ENCODE measurements at regions of chr15 and their contacts with region 1.

Region 1: DNA sequence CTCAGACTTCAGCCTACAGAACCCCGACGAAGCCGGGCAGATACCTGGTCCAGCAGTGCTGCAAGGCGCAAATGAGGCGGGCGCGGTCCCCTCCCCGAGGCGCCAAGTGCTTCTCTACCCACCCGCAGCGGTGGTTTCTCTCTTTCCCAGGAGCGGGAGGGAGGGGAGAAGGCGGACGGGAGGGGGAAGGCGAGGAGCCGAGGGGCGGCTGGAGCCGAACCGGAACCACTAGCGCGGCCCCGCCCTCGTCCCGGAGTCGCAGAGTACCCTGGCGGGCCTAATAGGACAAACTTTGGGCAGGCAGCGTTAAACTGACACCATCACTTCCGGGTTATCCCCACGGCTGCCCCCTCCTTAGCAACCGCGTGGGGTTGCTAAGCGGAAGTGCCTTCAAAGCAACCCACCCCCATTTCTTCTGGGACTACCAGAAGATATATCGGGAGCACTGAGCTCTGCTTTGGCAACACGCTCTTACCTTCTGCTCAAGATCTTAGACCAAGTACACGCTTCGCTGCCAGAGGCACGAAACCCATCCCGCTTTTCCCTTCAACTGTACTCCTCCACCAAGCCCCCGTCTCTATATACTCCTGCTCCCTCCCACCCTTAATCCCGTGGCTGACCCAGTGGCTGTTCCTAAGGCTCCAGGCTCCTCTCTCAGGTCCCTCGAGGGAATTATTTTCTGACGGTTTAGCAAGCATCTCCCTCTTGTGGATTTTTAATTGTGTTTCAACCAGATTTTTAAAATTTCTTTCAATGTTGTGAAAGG is at the start of gene CSNK1G1:
- DNase-seq: peak; percentile 96
- ATAC-seq: peak; percentile 98
- H3K4me3 ChIP-seq: peak within 1 kb of the TSS; percentile 85 to 95 (median 94)
- H3K27ac ChIP-seq: peak within 1 kb of the TSS; percentile 64
- H3K4me1 ChIP-seq: peaks cover 19% of the 10 kb centered on the region
- H3K27me3 ChIP-seq: no peaks in the 10 kb centered on the region; a peak in 1 of 5 replicates
- CTCF ChIP-seq: peak; percentile 42; the same call in 1 of the 2 replicates
- EP300 ChIP-seq: no peak
- POLR2A ChIP-seq: peak in 1 of 2 experiments; percentile 68; a peak in 2 of 4 replicates
- RAD21 ChIP-seq: peak; percentile 41; the same call in 1 of the 2 replicates
- total RNA-seq, gene CSNK1G1: 12.6 and 14.9 TPM in 2 replicates

Region 2: DNA sequence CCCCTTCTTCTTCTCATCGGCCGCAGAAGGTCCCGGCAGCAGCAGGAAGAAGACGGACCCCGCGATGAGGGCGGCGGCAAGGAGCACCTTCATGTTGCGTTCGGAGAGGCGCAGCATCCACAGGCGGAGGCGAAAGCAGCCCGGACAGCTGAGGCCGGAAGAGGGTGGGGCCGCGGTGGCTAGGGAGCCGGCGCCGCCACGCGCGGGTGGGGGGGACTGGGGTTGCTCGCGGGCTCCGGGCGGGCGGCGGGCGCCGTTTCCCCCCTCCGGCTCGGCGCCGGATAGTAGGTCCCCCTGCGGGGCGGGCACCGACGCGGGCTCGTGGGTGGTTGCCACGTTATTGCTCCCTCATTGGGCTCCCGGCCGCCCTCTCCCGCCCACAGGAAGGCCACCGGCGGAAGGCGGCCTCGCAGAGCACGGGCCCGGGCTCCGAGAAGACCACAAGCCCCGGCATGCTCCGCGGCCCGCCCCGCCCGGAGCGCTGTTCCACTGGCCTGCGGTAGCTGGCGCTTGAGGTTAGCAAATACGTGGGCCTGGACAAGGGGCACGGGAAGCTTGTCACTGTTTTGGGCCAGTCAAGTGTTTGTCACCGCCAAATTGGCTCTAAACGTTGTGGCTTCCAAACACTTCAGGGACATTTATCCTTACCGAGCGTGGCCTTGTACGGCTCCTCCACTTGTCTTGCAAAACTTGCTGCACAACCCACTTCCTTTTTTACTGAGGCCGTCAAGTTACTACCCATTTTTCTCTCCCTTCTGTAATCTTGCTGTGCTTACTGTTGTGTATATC is 193.1 kb before region 1 on chr15 and contains the start of gene PPIB:
- CTCF ChIA-PET with region 1: no interaction called
- POLR2A ChIA-PET with region 1: interaction called, 6 read pairs
- in situ Hi-C with region 1: no loop called
- intact Hi-C with region 1: loop called (anchors 5 kb)
- DNase-seq: peak; percentile 93
- ATAC-seq: peak; percentile 96
- H3K4me3 ChIP-seq: peak within 1 kb of the TSS; percentile 95 to 98 (median 97)
- H3K27ac ChIP-seq: peak within 1 kb of the TSS; percentile 90
- H3K4me1 ChIP-seq: peaks cover 53% of the 10 kb centered on the region
- H3K27me3 ChIP-seq: no peaks in the 10 kb centered on the region; a peak in 1 of 5 replicates
- CTCF ChIP-seq: peak; percentile 89
- EP300 ChIP-seq: 0 out of 4 replicates have a peak, but pooled peaks of 1 of the 2 experiments have one; percentile 19
- POLR2A ChIP-seq: peak; percentile 88
- RAD21 ChIP-seq: peak; percentile 66
- total RNA-seq, gene PPIB: 476 and 882 TPM in 2 replicates

Region 3: DNA sequence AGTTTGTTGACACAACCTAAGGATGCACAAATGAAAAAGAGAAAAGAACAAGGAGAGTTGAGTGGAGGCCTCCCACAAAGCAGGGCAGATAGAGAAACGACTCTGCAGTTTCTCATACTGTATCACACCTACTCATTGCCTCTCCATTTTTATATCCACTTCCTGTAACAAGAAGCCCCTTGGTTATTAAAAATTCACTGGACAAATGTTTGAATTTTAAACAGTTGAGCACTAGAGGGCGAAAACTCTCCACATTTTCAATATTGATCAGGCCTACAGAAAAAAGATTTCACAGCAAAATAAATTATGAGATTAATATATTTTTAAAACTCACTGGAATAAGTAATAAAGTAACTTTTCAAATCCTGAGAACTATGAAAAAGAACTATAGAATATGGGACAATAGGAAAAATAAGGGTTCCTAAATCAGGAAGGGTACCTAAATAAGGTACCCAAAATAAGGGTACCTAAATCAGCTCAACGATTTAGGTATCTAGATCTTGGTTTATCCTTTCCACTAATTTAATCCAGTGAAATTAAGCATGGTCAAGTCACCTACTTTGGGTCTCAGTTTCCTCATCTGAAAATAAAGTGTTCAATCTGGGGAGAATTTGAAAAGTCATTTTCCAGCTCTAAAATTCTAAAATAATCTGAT is 146.3 kb before region 1 on chr15:
- CTCF ChIA-PET with region 1: interaction called, 7 read pairs
- POLR2A ChIA-PET with region 1: no interaction called
- in situ Hi-C with region 1: loop called (anchors 5 kb)
- intact Hi-C with region 1: loop called (anchors 1 kb)
- DNase-seq: peak; percentile 32
- ATAC-seq: no peak
- H3K4me3 ChIP-seq: no peak overlapping the region
- H3K27ac ChIP-seq: no peak overlapping the region
- H3K4me1 ChIP-seq: no peaks in the 10 kb centered on the region
- H3K27me3 ChIP-seq: no peaks in the 10 kb centered on the region
- CTCF ChIP-seq: peak; percentile 38
- EP300 ChIP-seq: no peak
- POLR2A ChIP-seq: no peak
- RAD21 ChIP-seq: peak; percentile 51; the same call in 1 of the 2 replicates

Region 4: DNA sequence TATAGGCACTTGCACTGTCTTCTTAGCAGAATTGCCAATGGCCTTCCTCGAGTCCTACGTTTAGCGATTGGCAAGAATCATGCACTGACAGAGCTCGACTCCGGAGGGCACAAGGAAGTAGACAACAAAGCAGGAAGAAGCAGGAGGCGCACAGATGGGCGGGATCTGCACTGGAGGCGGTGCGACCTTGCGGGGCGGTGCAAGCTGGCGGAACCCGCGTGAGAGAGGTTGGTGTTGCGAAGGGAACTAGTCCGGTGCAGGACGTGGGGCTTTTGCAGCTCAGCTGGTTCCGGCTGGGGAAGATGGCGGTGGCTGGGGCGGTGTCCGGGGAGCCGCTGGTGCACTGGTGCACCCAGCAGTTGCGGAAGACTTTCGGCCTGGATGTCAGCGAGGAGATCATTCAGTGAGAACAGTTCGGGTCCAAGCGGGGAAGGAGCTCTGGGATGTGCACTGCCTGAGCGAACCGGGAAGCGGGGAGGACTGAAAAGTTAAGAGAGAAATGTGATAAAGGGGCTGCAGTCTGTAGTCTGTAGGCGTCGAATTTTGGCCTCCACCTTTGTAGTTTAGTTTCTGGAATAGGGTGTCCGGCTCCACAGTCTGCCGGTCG is 31.5 kb after region 1 on chr15 and contains the start of gene TRIP4:
- CTCF ChIA-PET with region 1: no interaction called
- POLR2A ChIA-PET with region 1: interaction called, 12 read pairs
- in situ Hi-C with region 1: no loop called
- intact Hi-C with region 1: loop called (anchors 1 kb)
- DNase-seq: peak; percentile 93
- ATAC-seq: peak; percentile 100
- H3K4me3 ChIP-seq: peak within 1 kb of the TSS; percentile 67 to 98 (median 94)
- H3K27ac ChIP-seq: peak within 1 kb of the TSS; percentile 72
- H3K4me1 ChIP-seq: peaks cover 20% of the 10 kb centered on the region
- H3K27me3 ChIP-seq: no peaks in the 10 kb centered on the region; a peak in 1 of 5 replicates
- CTCF ChIP-seq: peak; percentile 61
- EP300 ChIP-seq: peak in 1 of 2 experiments; percentile 67; a peak in 2 of 4 replicates
- POLR2A ChIP-seq: peak; percentile 90 to 91
- RAD21 ChIP-seq: peak; percentile 76
- total RNA-seq, gene TRIP4: 7.1 and 19.7 TPM in 2 replicates

Region 5: DNA sequence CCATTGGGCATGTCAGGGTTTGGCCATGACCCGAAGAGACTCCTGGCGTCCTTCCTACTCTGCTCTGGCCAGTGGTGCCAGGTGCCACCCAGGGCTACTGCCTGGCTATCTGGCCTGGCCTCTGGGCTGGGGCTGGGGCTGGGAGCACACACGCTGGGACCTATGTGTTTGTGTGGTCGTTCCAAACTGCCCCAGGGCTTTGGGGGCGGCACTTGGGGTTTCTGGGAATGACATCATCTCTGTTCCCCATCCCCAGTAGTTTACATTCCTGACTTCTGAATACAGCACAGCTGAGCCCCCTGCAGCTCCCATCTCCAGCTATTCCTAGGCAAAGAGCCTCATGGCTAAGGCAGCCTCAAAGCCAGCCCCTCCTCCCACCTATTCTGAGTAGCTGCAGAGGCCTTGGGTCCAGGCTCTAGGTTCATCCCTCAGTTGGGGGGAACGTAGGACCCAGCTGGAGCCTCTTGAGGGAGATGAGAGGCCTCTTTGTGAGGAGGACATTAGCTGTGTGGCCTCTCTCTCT is 509.9 kb after region 1 on chr15:
- CTCF ChIA-PET with region 1: no interaction called
- POLR2A ChIA-PET with region 1: no interaction called
- in situ Hi-C with region 1: no loop called
- intact Hi-C with region 1: no loop called
- DNase-seq: no peak
- ATAC-seq: no peak
- H3K4me3 ChIP-seq: no peak overlapping the region
- H3K27ac ChIP-seq: no peak overlapping the region
- H3K4me1 ChIP-seq: no peaks in the 10 kb centered on the region
- H3K27me3 ChIP-seq: no peaks in the 10 kb centered on the region
- CTCF ChIP-seq: no peak
- EP300 ChIP-seq: no peak
- POLR2A ChIP-seq: no peak
- RAD21 ChIP-seq: no peak

Measured in HepG2 (cell line).